Common myeloid progenitor, CD34-positive (primary cell): ENCODE measurements at regions of chr6 and their contacts with region 1.

Region 1: GRCh38 chr6:130885392-130886192 is 58.4 kb downstream of the SMLR1 start:
- DNase-seq: peak; percentile 79 to 93 (median 86)
- H3K4me3 ChIP-seq: no peak overlapping the region
- H3K27ac ChIP-seq: no peak overlapping the region
- H3K4me1 ChIP-seq: no peaks in the 10 kb centered on the region
- H3K27me3 ChIP-seq: no peaks in the 10 kb centered on the region

Region 2: GRCh38 chr6:130724089-130724488 is 161.5 kb before region 1 on chr6:
- CTCF ChIA-PET with region 1: no interaction called
- POLR2A ChIA-PET with region 1: no interaction called
- DNase-seq: no peak
- H3K4me3 ChIP-seq: no peak overlapping the region
- H3K27ac ChIP-seq: no peak overlapping the region
- H3K4me1 ChIP-seq: peaks cover 0 to 4% (median 0%) of the 10 kb centered on the region in 4 experiments
- H3K27me3 ChIP-seq: peaks cover 0 to 62% (median 34%) of the 10 kb centered on the region in 5 experiments

Region 3: GRCh38 chr6:130862370-130862769 is 23.2 kb before region 1 on chr6:
- CTCF ChIA-PET with region 1: no interaction called
- POLR2A ChIA-PET with region 1: no interaction called
- DNase-seq: no peak
- H3K4me3 ChIP-seq: no peak overlapping the region
- H3K27ac ChIP-seq: no peak overlapping the region
- H3K4me1 ChIP-seq: no peaks in the 10 kb centered on the region
- H3K27me3 ChIP-seq: no peaks in the 10 kb centered on the region

Region 4: DNA sequence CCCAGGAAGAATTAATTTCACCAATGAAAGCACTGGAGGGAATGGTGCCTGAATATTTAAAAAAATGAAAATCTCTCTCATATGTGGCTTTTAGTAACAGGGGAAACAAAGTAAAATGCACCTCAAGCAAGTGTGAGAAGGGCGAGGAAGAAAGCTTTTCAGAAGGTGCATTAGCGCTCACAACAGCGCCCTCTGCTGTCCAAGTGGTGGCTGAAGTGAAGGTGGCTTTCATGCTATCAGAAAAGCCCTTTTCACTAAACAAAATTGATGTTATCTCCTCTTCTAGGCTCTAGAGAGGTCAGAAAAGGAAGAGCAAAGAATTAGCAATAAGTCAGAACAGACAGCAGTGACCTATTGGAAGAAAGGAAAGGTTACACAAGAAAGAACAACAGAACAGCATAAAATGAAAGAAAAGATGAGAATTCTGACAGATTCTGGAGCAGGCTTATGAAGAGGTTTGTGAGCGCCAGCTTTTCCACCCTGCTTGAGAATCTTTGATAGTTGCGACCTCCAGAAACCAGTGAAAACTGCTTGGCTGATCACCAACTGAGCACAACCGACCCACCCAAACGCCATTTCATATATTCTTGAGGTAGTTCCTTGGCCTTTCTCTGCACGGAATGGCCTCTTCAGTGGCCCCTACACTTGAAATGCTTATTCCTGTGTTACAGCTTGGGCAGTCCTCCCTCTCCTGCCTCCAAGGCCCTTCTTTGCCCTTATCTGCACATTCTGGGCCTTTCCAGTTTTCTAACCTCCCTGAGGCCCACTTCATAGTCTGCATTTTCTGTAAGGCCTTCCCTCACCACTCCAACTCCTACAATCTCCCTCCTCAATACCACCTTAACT is 13.1 kb before region 1 on chr6:
- CTCF ChIA-PET with region 1: interaction called, 12 read pairs
- POLR2A ChIA-PET with region 1: no interaction called
- DNase-seq: peak; percentile 37 to 70 (median 58)
- H3K4me3 ChIP-seq: no peak overlapping the region
- H3K27ac ChIP-seq: no peak overlapping the region
- H3K4me1 ChIP-seq: no peaks in the 10 kb centered on the region
- H3K27me3 ChIP-seq: no peaks in the 10 kb centered on the region

Region 5: GRCh38 chr6:130896249-130896648 is 10.7 kb after region 1 on chr6:
- CTCF ChIA-PET with region 1: interaction called, 11 read pairs
- POLR2A ChIA-PET with region 1: no interaction called
- DNase-seq: no peak
- H3K4me3 ChIP-seq: no peak overlapping the region
- H3K27ac ChIP-seq: no peak overlapping the region
- H3K4me1 ChIP-seq: no peaks in the 10 kb centered on the region
- H3K27me3 ChIP-seq: no peaks in the 10 kb centered on the region

Region 6: GRCh38 chr6:131116749-131117360 is 231.3 kb after region 1 on chr6:
- CTCF ChIA-PET with region 1: interaction called, 29 read pairs
- POLR2A ChIA-PET with region 1: interaction called, 3 read pairs
- DNase-seq: peak; percentile 38 to 66 (median 53)
- H3K4me3 ChIP-seq: no peak overlapping the region
- H3K27ac ChIP-seq: no peak overlapping the region
- H3K4me1 ChIP-seq: no peaks in the 10 kb centered on the region
- H3K27me3 ChIP-seq: no peaks in the 10 kb centered on the region

Region 7: GRCh38 chr6:131167773-131168172 is 282.2 kb after region 1 on chr6:
- CTCF ChIA-PET with region 1: interaction called, 13 read pairs
- POLR2A ChIA-PET with region 1: no interaction called
- DNase-seq: peak in 2 of 3 donors; percentile 8 to 9
- H3K4me3 ChIP-seq: no peak overlapping the region
- H3K27ac ChIP-seq: no peak overlapping the region
- H3K4me1 ChIP-seq: no peaks in the 10 kb centered on the region
- H3K27me3 ChIP-seq: no peaks in the 10 kb centered on the region

Region 8: DNA sequence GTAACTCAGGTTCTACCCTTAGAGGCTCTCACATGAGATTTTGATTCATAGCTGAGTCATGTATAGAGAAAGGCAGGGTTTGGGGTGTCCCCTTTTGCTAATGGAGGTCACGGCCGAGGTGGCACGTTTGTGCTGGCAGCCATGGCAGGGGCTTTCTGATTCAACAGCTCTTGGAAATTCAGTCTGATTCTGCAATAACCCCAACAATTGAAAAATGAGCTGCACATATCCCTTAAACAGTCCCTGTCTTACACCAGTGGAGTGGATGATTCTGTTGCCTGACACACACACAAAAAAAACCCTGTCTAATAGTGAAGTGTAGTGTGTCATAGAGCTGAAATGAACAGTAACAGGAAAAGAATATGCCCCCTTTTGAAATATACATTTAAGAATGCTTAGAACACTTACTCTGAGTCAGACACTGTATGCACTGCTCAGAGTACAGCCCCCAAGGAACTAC is 647.0 kb after region 1 on chr6:
- CTCF ChIA-PET with region 1: interaction called, 26 read pairs
- POLR2A ChIA-PET with region 1: no interaction called
- DNase-seq: no peak
- H3K4me3 ChIP-seq: no peak overlapping the region
- H3K27ac ChIP-seq: no peak overlapping the region
- H3K4me1 ChIP-seq: peaks cover 0 to 9% (median 0%) of the 10 kb centered on the region in 4 experiments
- H3K27me3 ChIP-seq: no peaks in the 10 kb centered on the region

Region 9: DNA sequence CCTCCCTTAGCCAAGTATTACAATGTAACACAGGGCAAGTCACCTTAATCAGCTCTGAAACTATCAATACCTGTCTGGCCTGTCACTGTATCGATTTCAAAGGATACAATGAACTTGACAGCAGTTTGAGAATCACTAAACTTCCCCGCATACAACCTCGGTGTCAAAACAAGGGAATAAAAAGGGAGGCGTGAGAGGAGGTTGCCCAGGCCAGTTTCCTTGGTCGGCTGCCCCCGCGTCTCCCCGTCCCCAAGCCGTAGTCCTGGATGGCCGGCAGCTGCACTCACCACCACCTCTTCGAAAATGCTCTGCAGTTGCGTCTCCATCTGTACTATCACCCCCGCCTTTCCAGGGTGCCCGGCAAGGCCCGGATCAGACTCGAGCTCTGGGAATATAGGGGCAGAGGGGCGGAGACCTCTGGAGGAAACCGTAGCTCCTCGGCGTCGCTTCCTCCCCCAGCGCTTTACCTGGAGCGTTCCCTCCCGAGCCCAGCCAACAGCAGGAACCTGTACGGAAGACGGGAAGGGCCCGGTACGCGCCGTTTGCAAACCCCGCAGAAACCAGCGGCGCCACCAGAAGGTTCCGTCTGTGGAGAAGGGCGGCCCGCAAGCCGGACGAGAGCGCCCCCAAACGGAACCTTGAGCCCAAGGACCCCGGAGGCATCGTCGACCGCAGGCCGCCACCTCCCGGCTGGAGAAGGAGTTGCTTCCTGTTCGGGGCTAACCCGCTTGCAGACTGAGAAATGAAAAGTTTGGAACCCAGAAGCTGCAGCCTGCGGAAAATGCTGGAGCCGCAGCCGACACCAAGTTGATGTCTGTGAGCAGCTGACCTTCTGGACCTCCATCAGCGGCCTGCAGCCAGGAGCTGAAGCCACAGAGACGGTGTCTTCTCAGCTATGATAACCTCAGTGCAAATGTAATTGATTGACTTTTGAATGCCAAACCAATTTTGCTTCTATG is 742.4 kb after region 1 on chr6 and contains the start of gene MED23:
- CTCF ChIA-PET with region 1: interaction called, 15 read pairs
- POLR2A ChIA-PET with region 1: no interaction called
- DNase-seq: peak; percentile 96 to 97 (median 96)
- H3K4me3 ChIP-seq: peak within 1 kb of the TSS; percentile 82 to 97 (median 96)
- H3K27ac ChIP-seq: peak within 1 kb of the TSS; percentile 78 to 89
- H3K4me1 ChIP-seq: peaks cover 4 to 14% (median 12%) of the 10 kb centered on the region in 4 experiments
- H3K27me3 ChIP-seq: no peaks in the 10 kb centered on the region